PC-3 (cell line): ENCODE measurements at regions of chr3 and their contacts with region 1.

Region 1: GRCh38 chr3:146851665-146852064 is 246.5 kb upstream of the PLSCR5 start:
- DNase-seq: peak; percentile 69
- ATAC-seq: peak; percentile 71
- H3K4me3 ChIP-seq: no peak overlapping the region
- H3K27ac ChIP-seq: no peak overlapping the region
- H3K4me1 ChIP-seq: peaks cover 10% of the 10 kb centered on the region; the same call in 1 of the 2 replicates
- H3K27me3 ChIP-seq: peaks cover 57% of the 10 kb centered on the region
- CTCF ChIP-seq: no peak

Region 2: DNA sequence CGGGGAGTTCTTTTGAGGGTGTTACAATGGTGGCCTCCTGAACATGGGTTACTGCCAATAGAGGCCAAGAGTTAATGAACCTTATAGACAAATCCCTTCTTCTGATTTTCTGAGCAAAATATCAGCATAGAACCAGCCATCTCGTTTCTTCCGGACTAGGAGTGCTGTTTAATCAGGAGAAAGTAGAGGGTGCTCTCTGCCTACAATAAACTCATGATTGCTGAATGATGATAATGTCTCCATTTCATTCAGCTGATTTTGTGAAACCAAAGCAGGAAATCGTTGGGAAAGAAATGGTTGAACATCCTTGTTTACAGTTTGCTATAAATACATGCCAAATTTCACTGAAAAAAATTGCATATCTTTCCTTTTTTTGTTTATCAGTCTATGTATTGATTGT is 103.7 kb before region 1 on chr3:
- CTCF ChIA-PET with region 1: no interaction called
- POLR2A ChIA-PET with region 1: no interaction called
- intact Hi-C with region 1: loop called (anchors 5 kb)
- DNase-seq: peak; percentile 46
- ATAC-seq: peak; percentile 25
- H3K4me3 ChIP-seq: peak overlapping the region; percentile 24
- H3K27ac ChIP-seq: peak overlapping the region; percentile 77
- H3K4me1 ChIP-seq: peaks cover 32% of the 10 kb centered on the region
- H3K27me3 ChIP-seq: no peaks in the 10 kb centered on the region
- CTCF ChIP-seq: peak; percentile 47